Mammary epithelial cell (primary cell): ENCODE measurements at regions of chr4 and their contacts with region 1.

Region 1: GRCh38 chr4:82462415-82462831 is 32.0 kb downstream of the ENOPH1 start:
- DNase-seq: peak; percentile 62
- H3K4me3 ChIP-seq: no peak overlapping the region
- H3K27ac ChIP-seq: no peak overlapping the region
- H3K4me1 ChIP-seq: no peaks in the 10 kb centered on the region
- H3K27me3 ChIP-seq: no peaks in the 10 kb centered on the region
- CTCF ChIP-seq: peak; percentile 78 to 79

Region 2: DNA sequence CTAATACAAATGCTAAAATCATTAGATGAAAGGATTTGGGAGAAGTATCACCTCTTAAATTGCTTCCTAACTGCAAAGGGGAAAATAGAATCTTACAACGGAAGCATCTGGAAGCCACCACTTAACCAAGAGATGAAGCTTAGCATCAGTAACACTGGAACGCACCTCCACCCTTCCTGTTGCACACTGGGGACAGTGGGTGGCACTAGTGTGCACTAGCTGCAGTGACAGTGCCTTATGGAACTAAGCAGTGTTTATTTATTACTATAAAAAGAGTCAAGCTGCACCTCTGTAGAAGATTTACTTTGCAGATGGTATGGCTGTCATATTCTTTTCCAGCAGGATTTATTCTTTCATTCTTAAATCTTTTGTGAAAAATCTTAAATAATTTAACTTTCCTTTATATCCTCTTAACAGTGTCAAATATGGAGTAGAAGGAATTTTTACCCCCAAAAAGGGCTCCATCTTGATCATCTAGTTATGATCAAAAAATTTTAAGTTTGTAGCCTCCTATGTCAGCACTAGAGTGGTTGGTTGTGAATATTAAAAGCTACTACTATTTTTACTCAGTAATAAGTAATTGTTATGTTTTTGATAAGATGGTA is 259.5 kb after region 1 on chr4:
- CTCF ChIA-PET with region 1: interaction called, 7 read pairs
- dilution Hi-C with region 1: no loop called
- in situ Hi-C with region 1: no loop called
- intact Hi-C with region 1: loop called (anchors 5 kb)
- DNase-seq: no peak
- H3K4me3 ChIP-seq: no peak overlapping the region
- H3K27ac ChIP-seq: no peak overlapping the region
- H3K4me1 ChIP-seq: no peaks in the 10 kb centered on the region
- H3K27me3 ChIP-seq: no peaks in the 10 kb centered on the region
- CTCF ChIP-seq: peak; percentile 46 to 73

Region 3: GRCh38 chr4:82739316-82740179 is 277.1 kb after region 1 on chr4:
- CTCF ChIA-PET with region 1: interaction called, 5 read pairs
- dilution Hi-C with region 1: no loop called
- in situ Hi-C with region 1: loop called in 1 of 2 experiments (anchors 10 kb)
- intact Hi-C with region 1: loop called (anchors 1 kb)
- DNase-seq: no peak
- H3K4me3 ChIP-seq: no peak overlapping the region
- H3K27ac ChIP-seq: no peak overlapping the region
- H3K4me1 ChIP-seq: peaks cover 11% of the 10 kb centered on the region
- H3K27me3 ChIP-seq: no peaks in the 10 kb centered on the region
- CTCF ChIP-seq: peak; percentile 91 to 99

Region 4: GRCh38 chr4:82798168-82799005 is 336.0 kb after region 1 on chr4 and contains the start of gene SCD5:
- CTCF ChIA-PET with region 1: interaction called, 5 read pairs
- dilution Hi-C with region 1: no loop called
- in situ Hi-C with region 1: loop called (anchors 25 kb)
- intact Hi-C with region 1: loop called (anchors 2 kb)
- DNase-seq: peak; percentile 86
- H3K4me3 ChIP-seq: peak within 1 kb of the TSS; percentile 71 to 85 (median 81)
- H3K27ac ChIP-seq: peak within 1 kb of the TSS; percentile 61
- H3K4me1 ChIP-seq: peaks cover 21% of the 10 kb centered on the region
- H3K27me3 ChIP-seq: no peaks in the 10 kb centered on the region
- CTCF ChIP-seq: no peak
- total RNA-seq, gene SCD5: 50.4 to 74.3 TPM

Region 5: GRCh38 chr4:82833696-82834313 is 371.4 kb after region 1 on chr4:
- CTCF ChIA-PET with region 1: no interaction called
- dilution Hi-C with region 1: no loop called
- in situ Hi-C with region 1: no loop called
- intact Hi-C with region 1: loop called (anchors 10 kb)
- DNase-seq: peak; percentile 69
- H3K4me3 ChIP-seq: no peak overlapping the region
- H3K27ac ChIP-seq: peak overlapping the region; percentile 29
- H3K4me1 ChIP-seq: peaks cover 9% of the 10 kb centered on the region
- H3K27me3 ChIP-seq: no peaks in the 10 kb centered on the region
- CTCF ChIP-seq: peak; percentile 7 to 29

Region 6: DNA sequence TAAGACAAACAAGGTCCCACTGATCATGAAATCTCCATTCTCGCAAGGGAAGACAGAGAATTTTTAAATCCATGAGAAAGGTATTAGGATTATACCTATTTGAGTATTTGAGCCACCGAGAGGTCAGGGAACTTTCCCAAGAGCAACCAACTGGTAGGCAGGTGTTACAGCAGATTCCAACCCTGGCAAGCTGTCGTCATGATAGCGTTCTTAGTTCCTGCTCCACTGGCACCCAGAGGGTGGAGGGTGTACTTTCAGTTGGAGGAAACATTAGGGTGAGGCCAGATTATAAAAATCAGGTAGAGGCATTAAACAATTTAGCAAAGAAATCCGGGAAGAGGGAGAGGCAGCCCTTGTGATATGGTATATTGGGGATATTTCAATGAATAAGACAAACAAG is 798.9 kb after region 1 on chr4:
- CTCF ChIA-PET with region 1: no interaction called
- dilution Hi-C with region 1: no loop called
- in situ Hi-C with region 1: no loop called
- intact Hi-C with region 1: loop called (anchors 2 kb)
- DNase-seq: no peak
- H3K4me3 ChIP-seq: no peak overlapping the region
- H3K27ac ChIP-seq: no peak overlapping the region
- H3K4me1 ChIP-seq: peaks cover 9% of the 10 kb centered on the region
- H3K27me3 ChIP-seq: no peaks in the 10 kb centered on the region
- CTCF ChIP-seq: no peak